ENCODE measurements at regions of chr10 and their contacts with region 1.

Region 1: GRCh38 chr10:27658788-27659187 is 86.8 kb downstream of the MKX start:
- DNase-seq: no peak
- H3K4me3 ChIP-seq: no peak overlapping the region
- CTCF ChIP-seq: no peak

Region 2: DNA sequence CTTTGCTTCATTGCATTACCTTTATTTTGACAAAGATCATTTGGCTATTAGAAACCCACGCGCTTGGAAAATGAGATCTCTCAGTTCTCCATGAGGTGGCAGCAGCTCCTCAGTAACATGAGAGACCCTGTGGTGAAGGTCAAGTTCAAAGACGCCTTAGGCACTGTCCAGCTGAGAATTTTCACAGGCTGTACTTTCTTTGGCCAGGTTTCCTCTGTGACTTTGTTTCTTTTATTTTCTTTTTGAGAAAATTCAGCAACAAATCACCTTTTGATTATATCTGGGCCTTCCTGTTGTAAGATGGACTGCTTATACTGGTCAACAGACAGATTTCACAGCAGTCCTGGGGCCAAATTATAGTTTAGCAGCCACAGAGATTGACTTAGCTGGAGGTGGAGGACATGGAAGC is 100.2 kb before region 1 on chr10:
- CTCF ChIA-PET with region 1: interaction called, 23 read pairs
- POLR2A ChIA-PET with region 1: no interaction called
- DNase-seq: peak; percentile 10
- H3K4me3 ChIP-seq: no peak overlapping the region
- CTCF ChIP-seq: peak; percentile 71

Region 3: DNA sequence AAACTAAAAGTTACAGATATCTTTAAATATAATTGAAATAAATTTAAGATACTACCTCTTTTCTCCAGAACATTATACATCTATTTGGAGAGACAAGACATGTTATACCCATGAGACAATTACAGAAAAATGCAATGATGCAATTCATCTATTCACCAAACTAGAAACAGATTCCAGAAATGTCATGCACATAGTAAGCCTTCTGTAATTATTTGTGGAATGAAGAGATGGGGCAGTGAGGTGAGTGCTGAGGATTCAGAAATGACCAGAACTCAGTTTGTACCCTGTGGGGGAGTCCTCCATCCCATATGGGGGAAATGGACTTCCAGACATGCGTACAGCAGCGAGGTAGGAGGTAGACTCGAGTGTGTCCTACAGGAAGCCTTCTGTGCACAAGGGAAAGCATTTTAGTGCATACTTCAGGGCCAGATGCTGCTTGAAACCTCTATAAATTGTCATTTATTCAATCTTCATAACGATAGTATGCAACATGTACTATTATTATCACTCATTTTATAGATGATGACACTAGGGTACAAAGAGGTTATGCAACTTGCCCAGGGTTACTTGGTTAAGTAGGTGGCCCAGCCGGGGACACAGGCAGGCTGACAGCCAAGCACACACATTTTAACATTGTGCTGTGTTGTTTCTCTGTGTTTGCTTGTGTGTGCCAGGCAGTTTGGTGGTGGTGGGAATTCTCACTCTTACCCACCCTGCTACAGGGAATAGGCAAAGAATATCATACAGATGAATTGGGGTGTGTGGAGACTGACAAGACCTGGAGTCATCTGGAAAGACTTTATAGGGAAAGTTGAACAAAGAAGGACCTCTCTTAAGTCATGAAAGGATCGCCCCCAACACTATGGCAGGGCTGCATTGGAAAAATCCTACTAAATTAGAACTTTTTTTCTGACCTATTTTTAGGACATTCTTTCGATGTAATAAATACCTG is 12.3 kb before region 1 on chr10:
- CTCF ChIA-PET with region 1: interaction called, 17 read pairs
- POLR2A ChIA-PET with region 1: interaction called, 3 read pairs
- DNase-seq: peak; percentile 54
- H3K4me3 ChIP-seq: no peak overlapping the region
- CTCF ChIP-seq: no peak

Region 4: GRCh38 chr10:27680006-27680557 is 21.3 kb after region 1 on chr10:
- CTCF ChIA-PET with region 1: interaction called, 10 read pairs
- POLR2A ChIA-PET with region 1: no interaction called
- DNase-seq: no peak
- H3K4me3 ChIP-seq: no peak overlapping the region
- CTCF ChIP-seq: no peak

Region 5: DNA sequence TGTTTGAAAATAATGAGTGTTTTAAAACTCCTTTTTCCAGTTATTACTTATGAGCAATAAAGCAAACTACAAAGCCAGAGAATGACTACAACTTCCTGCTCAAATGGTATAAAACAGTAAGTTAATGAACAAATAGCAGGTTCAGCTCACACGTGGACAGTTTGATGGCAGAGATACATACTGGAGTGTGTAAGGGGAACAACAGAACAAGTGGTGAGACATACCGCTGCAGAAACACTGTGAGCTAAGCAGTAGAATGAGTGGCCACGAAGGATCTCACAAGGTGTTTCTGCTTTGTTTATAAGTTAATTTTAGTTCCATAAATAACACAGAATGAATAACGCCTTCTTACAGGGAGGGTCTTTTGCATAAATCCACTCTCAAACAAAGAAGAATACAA is 89.8 kb after region 1 on chr10:
- CTCF ChIA-PET with region 1: no interaction called
- POLR2A ChIA-PET with region 1: no interaction called
- DNase-seq: no peak
- H3K4me3 ChIP-seq: no peak overlapping the region
- CTCF ChIP-seq: no peak

Measured in AG04449 (cell line).